Right cardiac atrium (tissue), 5 donors: ENCODE measurements at regions of chr1 and their contacts with region 1.

Region 1: DNA sequence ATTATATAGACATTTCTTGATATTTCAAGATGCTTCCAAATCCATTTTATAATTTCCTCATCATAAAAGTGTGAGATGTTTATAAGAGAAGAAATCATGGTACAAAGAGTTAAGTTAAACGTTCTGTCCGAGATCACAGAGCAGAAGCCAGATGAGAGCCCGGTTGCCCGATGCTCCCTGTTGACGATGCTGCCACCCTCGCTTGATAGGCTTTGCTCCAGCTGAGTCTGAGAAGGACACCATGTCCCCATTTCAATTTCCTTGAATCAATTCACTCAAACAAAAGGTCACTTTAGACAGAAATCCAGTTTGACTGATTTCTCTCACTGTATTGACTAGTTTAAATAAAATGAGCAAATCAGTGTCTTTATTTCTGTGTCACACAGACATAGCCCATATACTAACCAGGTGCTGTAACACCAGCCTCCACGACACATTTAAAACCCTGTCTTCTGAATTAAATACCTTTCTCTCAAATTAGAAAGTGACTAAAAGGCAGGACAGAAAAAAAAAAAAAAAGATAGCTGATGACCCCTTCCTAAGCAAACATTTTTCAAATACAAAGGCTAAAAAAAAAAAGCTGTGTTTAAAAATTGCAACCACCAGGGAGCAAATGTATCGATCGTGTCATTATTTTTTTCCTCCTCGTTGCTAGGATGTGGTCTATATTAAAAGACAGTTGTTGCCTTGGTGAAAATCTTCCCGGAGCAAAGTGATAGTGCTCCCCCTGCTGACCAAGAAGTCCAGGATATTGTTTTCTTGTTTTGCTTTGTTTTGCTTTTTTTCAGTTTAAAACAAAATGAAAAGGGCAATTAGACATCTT is 35.2 kb downstream of the DNASE2B start:
- DNase-seq: peak in 1 of 3 donors; percentile 51
- ATAC-seq: peak; percentile 75 to 83
- H3K4me3 ChIP-seq: peak overlapping the region; percentile 69
- H3K27ac ChIP-seq: no peak overlapping the region
- H3K4me1 ChIP-seq: no peaks in the 10 kb centered on the region
- H3K27me3 ChIP-seq: no peaks in the 10 kb centered on the region

Region 2: GRCh38 chr1:83931658-83932253 is 501.7 kb before region 1 on chr1:
- intact Hi-C with region 1: loop called in 1 of 4 experiments (anchors 10 kb)
- DNase-seq: no peak
- ATAC-seq: peak; percentile 67 to 77
- H3K4me3 ChIP-seq: no peak overlapping the region
- H3K27ac ChIP-seq: no peak overlapping the region
- H3K4me1 ChIP-seq: no peaks in the 10 kb centered on the region
- H3K27me3 ChIP-seq: no peaks in the 10 kb centered on the region

Region 3: DNA sequence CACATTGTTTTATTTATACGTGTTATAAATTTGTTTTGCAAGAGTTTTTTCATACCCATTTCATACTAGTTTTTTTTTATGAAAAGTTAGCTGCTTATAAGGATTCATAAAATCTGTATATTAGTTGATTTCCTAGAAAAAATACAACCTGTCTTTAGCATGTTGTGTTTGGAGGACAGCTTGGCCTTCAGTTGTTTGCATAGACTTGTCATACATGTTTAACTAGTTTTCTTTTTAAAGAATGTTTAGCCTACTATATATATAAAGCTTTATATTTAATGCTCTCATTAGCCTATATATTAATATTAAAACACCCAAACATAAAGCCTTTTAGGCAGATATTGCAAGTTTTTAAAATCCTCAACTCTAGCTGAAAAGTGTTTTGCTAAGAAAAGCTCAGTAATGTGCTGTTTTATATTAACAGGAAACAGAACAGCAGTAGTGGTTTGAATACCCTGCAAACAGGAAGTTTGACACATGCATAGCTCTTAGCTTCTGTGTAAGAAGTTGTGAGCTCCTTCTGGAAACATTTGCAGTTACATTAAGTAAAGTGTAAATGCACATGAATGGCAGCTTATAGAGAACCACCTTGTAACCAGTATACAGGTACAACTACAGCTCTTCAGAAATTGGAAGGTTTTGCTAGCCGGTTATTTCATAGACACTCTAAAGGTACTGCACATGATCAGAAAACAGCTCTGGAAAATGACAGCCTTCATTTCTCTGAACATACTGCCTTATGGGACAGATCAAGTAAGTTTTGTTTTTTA is 289.5 kb before region 1 on chr1 and contains the start of gene PRKACB:
- intact Hi-C with region 1: loop called (anchors 5 to 10 kb)
- DNase-seq: no peak
- ATAC-seq: peak; percentile 47
- H3K4me3 ChIP-seq: no peak within 1 kb of the TSS
- H3K27ac ChIP-seq: no peak within 1 kb of the TSS
- H3K4me1 ChIP-seq: no peaks in the 10 kb centered on the region
- H3K27me3 ChIP-seq: no peaks in the 10 kb centered on the region
- total RNA-seq, gene PRKACB: 49.6 to 53.5 (median 51.3) TPM

Region 4: DNA sequence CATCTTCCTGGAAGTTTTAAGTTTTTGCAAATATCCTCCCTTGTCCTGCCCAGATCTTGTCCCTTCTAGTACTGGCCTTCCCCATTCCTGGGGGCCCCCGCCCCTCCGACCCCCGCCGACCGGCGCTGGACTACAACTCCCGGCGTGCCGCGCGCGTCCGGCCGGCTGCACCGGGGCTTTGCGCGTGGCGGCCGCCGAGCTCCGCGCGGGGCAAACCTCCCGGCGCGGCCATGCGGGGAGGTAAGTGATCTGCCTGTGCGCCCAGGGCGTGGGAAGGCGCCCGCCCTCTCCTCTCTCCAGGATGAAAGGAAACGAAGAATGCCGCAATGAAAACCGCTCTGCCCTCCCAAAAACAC is 135.2 kb before region 1 on chr1:
- intact Hi-C with region 1: loop called in 3 of 4 experiments (anchors 5 to 10 kb)
- DNase-seq: peak; percentile 58 to 88 (median 87)
- ATAC-seq: peak; percentile 90 to 93
- H3K4me3 ChIP-seq: peak overlapping the region; percentile 74
- H3K27ac ChIP-seq: peak overlapping the region; percentile 32
- H3K4me1 ChIP-seq: no peaks in the 10 kb centered on the region
- H3K27me3 ChIP-seq: no peaks in the 10 kb centered on the region

Region 5: DNA sequence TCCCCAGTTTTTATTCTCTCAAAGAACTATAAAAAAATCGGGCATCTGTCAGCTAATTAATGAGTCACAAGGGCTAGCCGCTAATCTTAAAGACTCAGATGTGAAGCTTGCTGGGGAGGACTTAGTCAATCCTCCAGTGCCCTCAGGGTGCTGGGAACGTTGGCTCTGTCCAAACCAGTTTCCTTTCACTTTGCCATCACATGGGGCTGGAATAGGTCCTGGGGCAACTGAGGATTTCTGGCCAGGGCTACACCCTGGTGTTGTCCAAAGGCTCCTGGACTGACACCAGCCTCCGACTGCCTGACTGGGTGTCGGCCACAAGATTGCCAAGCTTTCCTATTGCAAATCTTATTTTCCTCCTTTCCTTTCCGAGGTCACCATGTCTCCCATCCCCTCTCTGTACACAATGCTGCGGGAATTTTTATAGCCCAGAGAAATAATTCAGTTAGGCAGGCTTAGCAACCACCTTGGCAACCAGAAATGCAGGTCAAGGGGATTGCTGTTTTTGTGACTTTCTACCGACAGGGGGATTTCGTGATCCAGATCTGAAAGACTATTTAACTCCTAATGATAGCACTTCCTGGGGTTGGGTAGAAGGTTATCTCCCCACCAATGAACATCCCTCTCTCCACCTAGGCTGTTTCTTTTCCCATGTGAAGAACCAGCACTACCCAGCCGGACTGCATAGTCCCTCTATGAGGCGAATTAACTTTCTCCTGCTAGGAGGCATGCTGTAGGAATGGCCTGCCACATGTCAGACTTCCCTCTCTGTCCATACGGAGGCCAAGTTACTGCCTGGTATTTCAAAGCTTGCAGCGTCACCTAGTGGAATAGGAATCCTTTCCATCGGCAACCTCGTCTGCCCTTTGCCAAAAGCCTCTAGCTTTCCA is 170.7 kb after region 1 on chr1:
- intact Hi-C with region 1: loop called in 1 of 4 experiments (anchors 10 kb)
- DNase-seq: peak; percentile 59 to 79 (median 73)
- ATAC-seq: peak; percentile 88
- H3K4me3 ChIP-seq: peak overlapping the region; percentile 46
- H3K27ac ChIP-seq: peak overlapping the region; percentile 79
- H3K4me1 ChIP-seq: peaks cover 2% of the 10 kb centered on the region
- H3K27me3 ChIP-seq: no peaks in the 10 kb centered on the region

Region 6: DNA sequence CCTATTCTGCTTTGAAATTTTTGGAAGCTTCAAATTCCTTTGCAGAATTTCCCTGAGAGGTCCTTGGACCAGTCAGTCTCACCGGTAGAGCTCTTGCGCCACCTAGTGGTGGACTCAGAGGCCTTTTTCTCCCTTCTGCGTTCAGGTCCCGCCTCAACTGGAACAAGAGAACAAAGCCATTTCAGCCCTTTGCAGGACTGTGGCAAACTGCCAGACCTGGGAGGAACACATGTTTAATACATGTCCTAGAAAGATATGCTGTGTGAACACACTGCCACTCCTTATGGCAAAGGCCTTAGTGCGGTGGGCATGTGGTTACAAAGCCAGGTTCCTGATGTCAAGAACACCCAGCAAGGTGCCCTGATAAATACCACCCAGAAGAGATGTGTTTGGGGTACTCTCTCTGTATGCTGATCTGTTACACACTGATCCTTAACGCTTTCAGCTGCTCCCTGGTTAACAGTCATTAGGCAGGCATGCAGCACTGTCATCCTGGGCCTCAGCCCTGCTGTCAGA is 339.0 kb after region 1 on chr1:
- intact Hi-C with region 1: loop called in 1 of 4 experiments (anchors 10 kb)
- DNase-seq: peak; percentile 77 to 87 (median 83)
- ATAC-seq: peak; percentile 89
- H3K4me3 ChIP-seq: no peak overlapping the region
- H3K27ac ChIP-seq: no peak overlapping the region
- H3K4me1 ChIP-seq: no peaks in the 10 kb centered on the region
- H3K27me3 ChIP-seq: no peaks in the 10 kb centered on the region